Activated B cell treated with CpG ODN at 0.5 μM for 24 hours (primary cell): ENCODE measurements at regions of chr12 and their contacts with region 1.

Region 1: GRCh38 chr12:132429946-132430643 is 59.9 kb upstream of the FBRSL1 start:
- DNase-seq: peak; percentile 60
- ATAC-seq: peak; percentile 87
- H3K4me3 Mint-ChIP-seq: peak overlapping the region; percentile 60
- H3K27ac Mint-ChIP-seq: peak overlapping the region; percentile 30
- H3K4me1 Mint-ChIP-seq: peaks cover 61% of the 10 kb centered on the region
- H3K27me3 Mint-ChIP-seq: no peaks in the 10 kb centered on the region
- CTCF ChIP-seq: no peak

Region 2: DNA sequence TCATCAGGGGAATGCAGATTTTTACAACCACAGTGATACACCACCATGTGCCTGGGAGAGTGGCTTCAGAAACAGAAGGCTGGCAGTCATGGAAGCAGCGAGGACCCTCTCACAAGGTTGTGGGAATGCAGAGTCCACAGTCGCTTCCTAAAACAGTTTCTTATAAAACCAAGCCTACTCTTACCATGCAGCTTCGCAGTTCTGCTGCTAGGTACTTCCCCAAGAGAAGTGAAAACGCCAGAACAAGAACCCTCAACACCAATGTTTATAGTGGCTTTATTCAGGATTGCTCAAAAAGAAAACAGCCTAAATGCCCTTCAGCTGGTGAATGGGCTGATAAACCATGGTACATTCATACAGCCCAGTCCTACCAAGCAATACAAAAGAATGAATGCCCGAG is 373.1 kb before region 1 on chr12:
- CTCF ChIA-PET with region 1: no interaction called
- POLR2A ChIA-PET with region 1: no interaction called
- intact Hi-C with region 1: no loop called
- DNase-seq: no peak
- ATAC-seq: peak; percentile 71
- H3K4me3 Mint-ChIP-seq: peak overlapping the region; percentile 24
- H3K27ac Mint-ChIP-seq: peak overlapping the region; percentile 61
- H3K4me1 Mint-ChIP-seq: peaks cover 39% of the 10 kb centered on the region
- H3K27me3 Mint-ChIP-seq: no peaks in the 10 kb centered on the region
- CTCF ChIP-seq: no peak

Region 3: GRCh38 chr12:132445884-132446632 is 16.0 kb after region 1 on chr12:
- CTCF ChIA-PET with region 1: no interaction called
- POLR2A ChIA-PET with region 1: interaction called, 5 read pairs
- intact Hi-C with region 1: loop called (anchors 2 kb)
- DNase-seq: no peak
- ATAC-seq: peak; percentile 9
- H3K4me3 Mint-ChIP-seq: peak overlapping the region; percentile 66
- H3K27ac Mint-ChIP-seq: peak overlapping the region; percentile 98
- H3K4me1 Mint-ChIP-seq: peaks cover 63% of the 10 kb centered on the region
- H3K27me3 Mint-ChIP-seq: no peaks in the 10 kb centered on the region
- CTCF ChIP-seq: no peak

Region 4: DNA sequence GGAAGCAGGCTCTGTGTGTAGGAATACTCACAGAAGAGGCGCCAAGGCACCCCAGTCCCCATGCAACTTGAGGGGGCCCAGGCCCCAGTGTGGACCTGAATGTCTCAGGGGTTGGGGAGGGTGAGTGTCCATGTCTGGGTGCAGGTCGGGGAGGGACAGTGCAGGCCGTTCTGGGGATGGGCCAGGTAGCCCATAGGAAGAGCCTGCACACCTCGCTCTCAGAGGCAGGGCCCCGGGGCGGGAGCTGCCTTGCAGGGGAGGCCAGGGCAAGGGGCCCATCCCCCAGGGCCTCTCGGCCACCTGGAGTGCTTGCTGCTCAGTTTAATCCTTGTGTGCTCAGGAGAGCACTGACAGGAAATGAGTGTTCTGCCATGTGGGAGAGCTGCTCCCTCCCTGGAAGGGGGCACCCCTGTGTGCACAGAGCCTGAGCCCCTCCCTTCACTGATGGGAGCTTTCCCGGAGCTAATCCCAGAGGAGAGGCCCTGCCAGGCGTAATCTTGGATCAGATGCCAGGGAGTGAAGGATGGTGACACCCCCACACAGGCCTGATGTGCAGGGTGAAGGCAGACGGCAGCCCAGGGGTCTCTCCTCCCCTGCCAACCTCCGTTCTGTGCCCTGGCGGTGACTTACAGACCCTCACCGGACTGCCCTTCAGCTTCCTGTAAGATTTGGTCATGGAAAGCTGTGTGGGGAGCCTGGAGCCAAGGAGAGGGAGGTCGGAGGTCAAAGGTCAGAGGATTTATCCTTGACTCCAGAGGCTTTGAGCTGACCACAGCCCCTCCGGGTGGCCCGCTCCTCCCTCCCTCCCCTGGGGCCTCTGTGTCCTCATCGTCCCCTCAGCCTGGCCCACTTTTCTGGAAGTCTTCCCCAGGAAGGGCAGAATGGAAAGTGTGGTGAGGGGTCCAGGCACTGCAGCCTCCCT is 35.4 kb after region 1 on chr12:
- CTCF ChIA-PET with region 1: no interaction called
- POLR2A ChIA-PET with region 1: interaction called, 4 read pairs
- intact Hi-C with region 1: loop called (anchors 5 kb)
- DNase-seq: no peak
- ATAC-seq: no peak
- H3K4me3 Mint-ChIP-seq: no peak overlapping the region
- H3K27ac Mint-ChIP-seq: no peak overlapping the region
- H3K4me1 Mint-ChIP-seq: peaks cover 47% of the 10 kb centered on the region
- H3K27me3 Mint-ChIP-seq: no peaks in the 10 kb centered on the region
- CTCF ChIP-seq: no peak